ENCODE measurements at regions of chr4 and their contacts with region 1.

Region 1: GRCh38 chr4:174365018-174365587 is 81.4 kb downstream of the CEP44 start:
- DNase-seq: peak in 2 of 4 donors; percentile 26 to 34
- ATAC-seq: peak; percentile 36
- H3K4me3 ChIP-seq: no peak overlapping the region
- H3K27ac ChIP-seq: no peak overlapping the region
- H3K4me1 ChIP-seq: peaks cover 0 to 4% of the 10 kb centered on the region in 2 donors
- H3K27me3 ChIP-seq: no peaks in the 10 kb centered on the region
- CTCF ChIP-seq: peak; percentile 30 to 51

Region 2: DNA sequence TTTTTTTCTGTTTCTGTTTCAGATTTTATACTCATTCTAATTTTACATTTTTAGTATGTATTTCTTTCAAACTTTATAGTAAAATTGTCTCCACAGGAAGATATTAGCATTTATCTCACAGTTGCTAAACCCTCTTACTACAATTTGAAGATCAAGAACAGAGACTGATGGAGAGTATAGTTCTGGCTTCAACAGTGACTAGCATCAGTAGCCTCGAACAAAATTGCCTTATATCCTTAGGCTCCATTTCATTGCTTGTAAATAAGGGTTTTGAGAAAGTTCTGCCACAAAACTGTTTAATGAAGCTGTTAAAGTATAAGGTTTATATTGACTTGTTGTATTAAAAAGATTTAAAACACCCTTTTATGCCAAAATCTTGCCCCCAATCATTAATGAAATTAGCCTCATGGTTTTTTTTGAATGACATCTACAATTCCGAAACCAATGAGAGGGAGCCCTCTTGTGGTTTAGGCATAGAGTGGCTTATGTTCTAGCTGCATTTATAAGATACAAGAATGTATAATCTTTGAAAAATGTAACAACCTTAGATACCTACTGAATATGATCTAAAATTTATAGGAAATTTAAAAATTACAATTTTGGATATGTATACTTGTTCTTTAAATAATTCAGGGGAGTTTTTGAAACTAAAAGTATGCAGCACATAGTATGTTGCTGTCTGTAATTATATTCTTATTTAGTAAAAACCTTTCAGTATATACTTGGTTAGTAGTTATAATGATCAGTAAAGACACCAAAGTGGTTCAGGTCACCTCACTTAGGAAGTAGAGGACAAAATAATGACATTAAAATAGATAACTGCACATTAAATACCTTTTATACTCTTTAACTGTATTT is 267.0 kb after region 1 on chr4:
- intact Hi-C with region 1: loop called in 1 of 2 experiments (anchors 5 kb)
- DNase-seq: peak in 2 of 4 donors; percentile 20 to 41
- ATAC-seq: peak; percentile 83
- H3K4me3 ChIP-seq: no peak overlapping the region
- H3K27ac ChIP-seq: no peak overlapping the region
- H3K4me1 ChIP-seq: peaks cover 0 to 6% of the 10 kb centered on the region in 2 donors
- H3K27me3 ChIP-seq: no peaks in the 10 kb centered on the region
- CTCF ChIP-seq: peak; percentile 69 to 72

Region 3: DNA sequence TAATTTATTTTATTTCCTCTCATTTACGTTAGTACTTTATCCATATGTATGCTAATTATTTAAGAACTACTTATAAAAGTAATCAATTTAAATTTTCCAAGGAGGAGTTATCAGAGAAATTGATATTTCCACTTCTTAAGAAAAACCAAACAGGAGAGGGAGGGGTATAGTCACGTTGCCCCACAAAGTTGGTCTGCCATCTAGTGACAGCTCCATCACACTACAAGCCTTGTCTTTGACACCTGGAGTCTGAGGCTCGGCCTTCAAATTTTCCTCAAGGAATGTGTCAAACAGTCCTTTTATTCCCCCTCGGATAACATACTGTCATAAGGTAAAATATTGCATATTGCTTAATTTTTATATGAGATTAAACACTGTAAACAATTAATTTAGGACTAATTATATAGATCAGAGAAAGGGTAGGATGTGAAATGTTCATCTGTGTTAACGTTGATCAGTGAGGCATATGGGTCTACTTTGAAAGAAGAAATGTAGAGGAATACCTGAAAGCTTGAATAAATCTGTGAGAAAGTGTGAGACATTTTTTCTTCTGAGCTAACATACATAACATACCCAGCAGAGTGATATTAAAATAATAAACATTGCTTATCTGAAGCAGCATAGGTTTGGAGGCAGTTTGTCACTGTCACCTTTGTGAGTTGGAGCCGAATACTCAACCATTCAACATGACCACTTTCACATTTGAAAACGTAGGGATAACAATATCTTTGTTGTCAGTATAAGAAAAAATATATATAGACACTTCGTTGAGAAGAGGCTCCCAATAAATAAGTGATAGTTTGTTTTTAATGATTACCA is 349.5 kb after region 1 on chr4:
- intact Hi-C with region 1: loop called in 1 of 2 experiments (anchors 10 kb)
- DNase-seq: peak in 1 of 4 donors; percentile 5
- ATAC-seq: peak; percentile 86
- H3K4me3 ChIP-seq: no peak overlapping the region
- H3K27ac ChIP-seq: no peak overlapping the region
- H3K4me1 ChIP-seq: no peaks in the 10 kb centered on the region
- H3K27me3 ChIP-seq: no peaks in the 10 kb centered on the region
- CTCF ChIP-seq: peak; percentile 61

Region 4: DNA sequence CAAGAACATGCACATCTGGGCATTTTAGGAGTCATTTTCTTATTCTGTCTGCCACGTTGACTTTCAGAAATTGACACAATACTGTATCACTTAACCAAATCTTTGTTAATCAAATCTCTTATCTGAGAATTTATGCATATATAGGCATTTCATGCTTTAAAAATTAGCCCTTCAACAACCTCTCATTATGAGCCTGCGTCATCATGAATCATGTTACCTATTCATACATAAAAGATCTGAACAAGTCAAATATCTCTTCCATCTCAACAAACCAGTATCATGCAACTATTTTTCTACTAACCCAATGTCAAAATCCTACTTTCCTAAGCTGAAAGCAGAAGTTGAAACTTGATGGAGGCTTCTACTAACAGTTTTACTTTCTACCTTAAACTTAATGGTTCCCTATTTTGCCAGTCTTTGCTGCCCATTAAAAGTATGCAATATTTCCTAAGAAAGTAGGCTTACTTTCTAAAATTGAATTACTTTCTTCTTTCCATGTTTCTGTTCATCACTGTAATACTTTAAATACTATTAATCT is 554.9 kb after region 1 on chr4:
- intact Hi-C with region 1: no loop called
- DNase-seq: no peak
- ATAC-seq: no peak
- H3K4me3 ChIP-seq: no peak overlapping the region
- H3K27ac ChIP-seq: no peak overlapping the region
- H3K4me1 ChIP-seq: no peaks in the 10 kb centered on the region
- H3K27me3 ChIP-seq: no peaks in the 10 kb centered on the region
- CTCF ChIP-seq: no peak

Measured in left lung (tissue), 14 donors.